Gastrocnemius medialis (tissue), 4 donors: ENCODE measurements at regions of chr12 and their contacts with region 1.

Region 1: DNA sequence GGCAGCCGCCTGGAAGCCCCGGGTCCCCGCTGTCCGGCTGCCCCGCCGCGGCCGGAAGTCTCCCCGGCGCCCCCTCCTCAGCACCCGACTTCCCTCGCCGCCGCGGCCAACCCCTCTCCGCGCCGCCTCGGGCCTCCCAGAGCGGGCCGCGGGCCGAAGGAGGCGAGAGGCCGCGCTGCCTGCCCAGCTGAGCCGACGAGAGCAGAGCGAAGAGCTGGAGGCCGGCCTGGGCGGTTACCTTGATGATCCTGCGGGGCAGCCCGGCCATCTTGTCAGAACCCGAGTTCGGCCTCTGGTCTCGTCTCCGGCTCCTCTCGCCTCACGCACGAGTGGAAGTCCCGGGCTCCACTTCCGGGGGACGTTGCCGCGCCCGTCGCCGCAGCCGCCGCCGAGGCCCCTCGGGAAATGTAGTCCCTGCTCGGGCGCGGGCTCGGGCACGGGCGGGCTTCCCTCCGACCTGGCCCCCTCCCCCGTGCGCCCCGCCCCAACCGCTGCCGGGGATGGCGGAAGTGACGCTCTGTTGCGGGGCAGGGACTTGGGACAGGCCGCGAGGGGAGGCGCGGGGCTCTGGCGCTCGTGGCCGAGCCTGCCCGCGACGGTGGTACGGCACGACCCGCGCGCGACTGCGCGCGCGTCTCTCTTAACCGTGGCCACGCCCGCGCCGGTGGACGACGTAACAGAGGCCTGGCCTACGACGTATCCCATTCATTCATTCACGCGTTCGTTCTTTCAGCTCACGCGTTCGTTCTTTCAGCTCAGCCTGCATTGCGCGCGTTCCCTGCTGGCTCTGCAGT is at the start of gene UBE2N:
- DNase-seq: peak; percentile 93 to 94
- ATAC-seq: peak; percentile 90
- H3K4me3 ChIP-seq: peak within 1 kb of the TSS; percentile 71 to 99 (median 86)
- H3K27ac ChIP-seq: peak within 1 kb of the TSS; percentile 84 to 99 (median 91)
- H3K4me1 ChIP-seq: peaks cover 41 to 48% of the 10 kb centered on the region in 2 donors
- H3K27me3 ChIP-seq: no peaks in the 10 kb centered on the region
- CTCF ChIP-seq: no peak
- POLR2A ChIP-seq: peak; percentile 83 to 86
- total RNA-seq, gene UBE2N: 26.5 to 46.8 (median 30.5) TPM

Region 2: DNA sequence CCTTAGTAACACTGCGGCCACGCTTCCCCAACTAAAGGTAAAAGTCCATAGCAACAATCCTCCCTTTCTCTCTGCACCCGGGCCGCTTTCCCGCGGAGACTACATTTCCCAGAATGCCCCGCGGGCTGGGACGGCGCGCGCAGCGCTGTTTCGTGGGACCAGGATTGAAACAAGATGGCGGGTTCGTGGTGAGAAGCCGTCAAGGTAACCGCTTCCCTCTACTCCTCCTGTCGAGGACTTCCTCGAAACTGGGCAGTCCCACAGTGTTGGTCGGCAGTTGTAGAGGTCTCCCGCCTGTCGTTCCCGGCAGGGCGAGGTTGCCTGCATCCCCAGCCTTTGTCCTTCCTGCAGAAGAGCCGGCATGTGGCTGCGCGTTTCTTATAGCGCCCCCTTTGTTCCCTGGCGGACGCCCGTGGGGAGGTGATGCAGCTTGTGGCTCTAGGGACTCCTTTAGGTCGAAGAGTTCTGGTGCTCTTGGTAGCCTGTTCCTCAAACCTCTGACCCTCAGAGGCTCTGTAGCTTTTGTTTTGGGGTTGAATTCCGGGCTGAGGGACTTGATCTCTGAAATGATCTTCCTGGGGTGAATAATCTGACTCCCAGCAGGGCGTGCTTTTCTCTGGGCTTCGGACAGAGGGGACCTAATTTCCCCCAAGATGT is 25.7 kb after region 1 on chr12 and contains the start of gene MRPL42:
- in situ Hi-C with region 1: no loop called
- intact Hi-C with region 1: loop called (anchors 1 kb)
- DNase-seq: peak; percentile 61 to 85
- ATAC-seq: peak; percentile 96 to 98
- H3K4me3 ChIP-seq: peak within 1 kb of the TSS; percentile 72 to 93 (median 88)
- H3K27ac ChIP-seq: peak within 1 kb of the TSS; percentile 89 to 95 (median 95)
- H3K4me1 ChIP-seq: peaks cover 13 to 14% of the 10 kb centered on the region in 2 donors
- H3K27me3 ChIP-seq: no peaks in the 10 kb centered on the region
- CTCF ChIP-seq: peak; percentile 54 to 85 (median 68)
- POLR2A ChIP-seq: peak; percentile 50 to 67
- total RNA-seq, gene MRPL42: 14.0 to 44.6 (median 34.8) TPM

Region 3: DNA sequence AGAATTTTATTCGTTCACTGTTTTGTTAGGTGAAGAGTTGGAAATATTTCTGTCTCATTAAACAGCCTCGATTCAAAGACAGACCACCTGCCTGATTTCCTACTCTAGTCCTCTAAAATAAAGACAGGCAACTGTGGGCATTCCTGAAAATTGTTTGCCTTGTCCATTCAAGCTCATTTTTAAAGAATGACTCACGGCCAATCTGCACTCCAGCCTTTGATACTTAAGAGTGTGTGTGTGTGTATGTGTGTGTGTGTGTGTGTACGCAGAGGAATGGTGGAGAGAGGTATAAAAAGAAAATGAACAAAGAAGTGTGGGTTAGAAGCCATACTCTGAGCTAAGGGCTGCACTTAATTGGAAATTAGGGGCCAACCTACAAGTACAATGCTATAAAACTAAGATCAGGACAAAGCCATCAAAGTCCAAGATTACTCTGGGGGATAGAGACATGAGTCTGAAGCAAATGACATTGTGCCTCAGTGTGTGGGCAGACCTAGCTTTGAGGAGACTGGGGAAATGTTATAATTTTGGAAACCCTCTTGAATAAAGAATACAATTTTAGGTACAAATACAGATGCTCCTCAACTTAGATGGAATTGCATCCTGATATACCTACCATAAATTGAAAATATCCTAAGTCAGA is 85.1 kb after region 1 on chr12:
- in situ Hi-C with region 1: no loop called
- intact Hi-C with region 1: no loop called
- DNase-seq: no peak
- ATAC-seq: no peak
- H3K4me3 ChIP-seq: no peak overlapping the region
- H3K27ac ChIP-seq: no peak overlapping the region
- H3K4me1 ChIP-seq: no peaks in the 10 kb centered on the region
- H3K27me3 ChIP-seq: no peaks in the 10 kb centered on the region
- CTCF ChIP-seq: no peak
- POLR2A ChIP-seq: no peak

Region 4: DNA sequence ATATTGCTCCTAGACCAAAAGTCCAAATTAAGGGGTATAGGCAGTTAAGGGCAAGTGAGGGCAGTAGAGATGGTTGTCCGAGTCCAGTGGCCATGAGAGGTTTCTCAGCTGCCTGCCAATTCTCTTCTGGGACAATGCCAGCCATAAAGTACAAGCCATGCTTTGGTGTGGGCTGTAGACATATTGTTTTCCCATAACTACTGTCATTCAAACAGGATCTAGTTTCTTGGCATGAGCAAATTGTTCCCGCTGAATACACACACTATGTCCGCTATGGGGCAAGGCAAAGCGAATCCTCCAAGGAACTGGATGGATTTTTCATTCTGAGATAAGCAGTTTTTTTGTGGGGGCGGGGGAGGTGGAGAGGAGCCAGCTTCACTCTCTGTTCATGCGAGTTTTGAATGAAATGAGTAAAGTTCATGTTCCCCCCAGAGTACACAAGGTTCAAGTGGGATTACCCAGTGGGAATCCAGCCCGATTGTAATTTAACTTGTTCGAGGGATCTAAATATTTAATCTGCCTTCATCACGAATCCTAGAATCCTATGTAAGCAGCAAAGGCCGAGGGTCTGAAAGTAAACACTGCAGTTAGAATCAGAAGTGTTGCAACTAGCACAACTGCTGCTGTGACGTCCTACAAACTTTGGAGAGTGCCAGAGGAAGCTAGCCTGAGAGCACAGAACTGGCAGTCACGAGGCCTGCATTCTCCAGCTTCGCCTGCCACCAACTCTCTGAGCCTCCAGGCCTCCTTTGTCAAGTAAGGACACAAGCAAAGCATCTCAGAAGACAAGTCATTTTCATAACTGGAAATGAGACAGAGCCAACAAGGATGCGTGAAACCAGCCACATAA is 372.4 kb after region 1 on chr12:
- in situ Hi-C with region 1: no loop called
- intact Hi-C with region 1: no loop called
- DNase-seq: peak; percentile 95
- ATAC-seq: peak; percentile 93 to 96
- H3K4me3 ChIP-seq: peak overlapping the region; percentile 39 to 45 (median 42)
- H3K27ac ChIP-seq: peak overlapping the region; percentile 90 to 97 (median 96)
- H3K4me1 ChIP-seq: peaks cover 30 to 63% of the 10 kb centered on the region in 2 donors
- H3K27me3 ChIP-seq: no peaks in the 10 kb centered on the region
- CTCF ChIP-seq: peak in 4 of 5 experiments; percentile 12 to 22 (median 16)
- POLR2A ChIP-seq: peak in 1 of 2 donors; percentile 27

Region 5: DNA sequence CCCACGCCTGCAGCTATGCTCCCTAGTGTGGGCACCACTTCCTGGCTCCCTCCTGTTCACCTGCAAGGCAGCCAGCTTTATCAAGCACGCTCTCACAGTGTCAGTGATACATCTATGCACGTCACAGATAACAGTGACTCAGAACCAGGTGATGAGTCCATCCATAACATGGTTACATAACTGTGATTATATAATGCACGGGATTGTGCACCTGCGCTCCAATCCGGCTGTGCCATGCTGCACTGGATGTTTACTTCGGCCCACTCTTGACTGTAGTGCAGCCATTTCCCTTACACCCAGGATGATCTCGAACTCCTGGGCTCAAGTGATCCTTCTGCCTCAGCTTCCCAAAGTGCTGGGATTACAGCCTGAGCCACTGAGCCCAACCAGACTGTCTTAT is 1056.3 kb after region 1 on chr12:
- in situ Hi-C with region 1: no loop called
- intact Hi-C with region 1: no loop called
- DNase-seq: no peak
- ATAC-seq: no peak
- H3K4me3 ChIP-seq: no peak overlapping the region
- H3K27ac ChIP-seq: no peak overlapping the region
- H3K4me1 ChIP-seq: no peaks in the 10 kb centered on the region
- H3K27me3 ChIP-seq: no peaks in the 10 kb centered on the region
- CTCF ChIP-seq: no peak
- POLR2A ChIP-seq: no peak